ENCODE measurements at regions of chr11 and their contacts with region 1.

Region 1: DNA sequence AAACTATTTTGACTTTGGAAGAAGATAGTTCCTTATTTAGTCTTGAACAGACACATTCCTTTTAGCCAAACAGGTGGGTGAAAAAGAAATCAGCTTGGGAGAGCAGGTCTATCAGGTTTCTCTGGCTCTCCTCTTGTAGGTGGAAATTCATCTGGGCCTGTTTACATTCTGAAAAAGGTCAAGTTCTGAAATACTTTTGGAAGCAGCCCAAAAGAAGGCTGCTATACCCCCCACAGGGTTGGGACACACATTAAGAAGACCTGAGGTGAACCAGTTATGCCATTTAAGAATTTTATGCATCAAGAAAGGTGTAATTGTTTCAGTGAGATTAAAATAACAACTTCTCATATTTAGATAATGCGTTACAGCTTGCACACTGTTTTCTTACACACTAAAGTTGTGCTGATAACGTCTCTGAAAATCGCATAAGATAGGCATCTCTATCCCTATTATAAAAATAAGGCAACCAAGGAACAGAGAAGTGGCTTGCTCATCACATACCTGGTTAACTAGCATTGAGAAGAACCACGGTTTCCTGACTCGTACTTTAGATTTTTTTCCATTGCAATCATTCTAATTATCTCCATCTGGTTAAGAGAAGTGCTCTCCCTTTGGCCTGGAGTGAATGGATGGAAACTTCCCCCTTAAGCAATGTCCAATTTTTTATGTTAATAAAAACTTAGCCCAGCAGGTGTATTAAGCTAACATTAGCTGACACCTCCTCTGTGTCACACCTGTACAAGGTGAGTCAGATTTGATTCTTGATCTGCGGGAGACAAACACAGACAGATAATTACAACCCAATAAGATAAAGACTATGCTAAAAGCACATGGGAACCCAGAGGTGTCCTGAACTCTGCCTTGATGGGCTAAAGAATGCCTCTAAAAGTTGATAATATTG is 60.5 kb upstream of the UCP3 start:
- DNase-seq: peak; percentile 95
- ATAC-seq: peak; percentile 5; the same call in 1 of the 2 replicates
- H3K4me3 ChIP-seq: no peak overlapping the region; the same call in 1 of the 2 replicates
- H3K27ac ChIP-seq: peak overlapping the region; percentile 90
- H3K4me1 ChIP-seq: peaks cover 59% of the 10 kb centered on the region
- H3K27me3 ChIP-seq: no peaks in the 10 kb centered on the region
- CTCF ChIP-seq: no peak

Region 2: DNA sequence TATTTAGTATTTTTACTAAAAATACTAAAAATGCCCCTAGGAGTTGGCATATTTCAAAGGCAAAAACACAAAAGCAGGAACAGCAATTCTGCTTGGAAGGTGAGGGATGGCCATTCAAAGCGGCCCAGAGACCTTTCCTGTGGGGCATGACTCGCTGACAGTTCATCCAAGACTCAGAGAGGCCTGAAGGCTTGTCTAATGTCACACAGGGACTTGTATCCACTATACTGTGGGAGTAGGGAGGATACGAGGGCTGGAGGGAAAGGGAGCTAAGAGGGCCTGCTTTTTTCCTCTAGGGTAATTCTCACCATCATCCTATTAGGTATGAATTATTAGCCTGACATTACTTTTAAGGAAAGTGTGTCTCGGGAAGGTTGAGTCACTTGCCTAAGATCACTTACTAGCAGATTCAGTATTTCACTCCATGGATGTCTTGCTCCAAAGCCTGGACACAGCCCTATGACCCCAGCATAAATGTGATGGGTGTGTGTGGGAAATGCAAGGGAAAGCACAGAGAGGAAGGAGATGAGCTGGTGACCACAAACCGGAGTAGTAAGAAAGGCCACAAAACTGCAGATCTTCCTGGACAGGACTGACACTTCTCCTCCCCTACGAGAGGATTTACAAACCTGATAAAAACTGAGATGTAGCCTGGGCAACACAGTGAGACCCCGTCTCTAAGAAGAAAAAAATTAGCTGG is 43.8 kb before region 1 on chr11:
- CTCF ChIA-PET with region 1: no interaction called
- POLR2A ChIA-PET with region 1: no interaction called
- intact Hi-C with region 1: loop called (anchors 2 kb)
- DNase-seq: peak; percentile 87
- ATAC-seq: peak; percentile 86
- H3K4me3 ChIP-seq: no peak overlapping the region
- H3K27ac ChIP-seq: peak overlapping the region; percentile 89
- H3K4me1 ChIP-seq: peaks cover 32% of the 10 kb centered on the region
- H3K27me3 ChIP-seq: no peaks in the 10 kb centered on the region
- CTCF ChIP-seq: no peak